Heart right ventricle (tissue), 16 donors: ENCODE measurements at regions of chr11 and their contacts with region 1.

Region 1: GRCh38 chr11:44927174-44927661 is 23.5 kb downstream of the TP53I11 start:
- DNase-seq: peak; percentile 64 to 68
- ATAC-seq: peak in 7 of 8 donors; percentile 25 to 67 (median 52)
- H3K4me3 ChIP-seq: no peak overlapping the region
- H3K27ac ChIP-seq: no peak overlapping the region
- H3K4me1 ChIP-seq: peaks cover 5 to 35% (median 14%) of the 10 kb centered on the region in 9 donors
- H3K27me3 ChIP-seq: no peaks in the 10 kb centered on the region
- CTCF ChIP-seq: peak; percentile 64 to 93 (median 88)

Region 2: GRCh38 chr11:44709966-44710365 is 217.3 kb before region 1 on chr11:
- intact Hi-C with region 1: no loop called
- DNase-seq: no peak
- ATAC-seq: no peak
- H3K4me3 ChIP-seq: no peak overlapping the region
- H3K27ac ChIP-seq: no peak overlapping the region
- H3K4me1 ChIP-seq: peaks cover 0 to 21% (median 0%) of the 10 kb centered on the region in 9 donors
- H3K27me3 ChIP-seq: no peaks in the 10 kb centered on the region
- CTCF ChIP-seq: no peak

Region 3: DNA sequence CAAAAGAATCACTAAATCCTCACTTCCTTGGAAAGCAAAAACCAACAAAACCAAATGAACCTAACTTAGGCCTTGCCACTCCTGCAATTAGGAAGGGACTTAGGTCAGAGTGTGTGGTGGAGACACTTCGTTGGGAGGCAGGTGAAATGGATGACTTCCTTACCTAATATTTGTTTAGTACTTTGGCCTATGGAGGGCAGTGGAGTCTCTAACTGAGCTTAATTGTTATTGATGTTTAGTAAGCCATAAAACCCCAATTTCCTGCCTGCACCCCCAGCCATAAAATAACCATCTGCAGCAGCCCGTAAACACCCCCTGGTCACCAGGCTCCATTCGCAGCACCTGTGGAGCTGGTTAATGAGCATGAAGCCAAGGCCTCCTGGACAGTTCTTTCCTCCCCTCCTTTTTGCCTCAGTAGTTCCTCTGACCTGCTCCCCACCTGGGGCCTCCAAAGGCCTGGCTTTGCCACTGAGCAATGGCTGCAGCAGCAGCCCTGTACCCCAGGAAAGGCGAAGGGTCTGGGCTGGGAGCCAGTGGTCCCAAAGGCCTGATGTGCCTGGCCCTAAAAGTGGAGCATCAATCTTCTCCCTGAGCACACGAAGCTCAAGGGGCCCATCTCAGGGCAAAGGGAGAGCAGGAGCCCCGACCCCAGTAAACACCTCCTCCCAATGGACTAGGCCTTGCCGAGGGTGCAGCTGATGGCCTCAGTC is 374.5 kb after region 1 on chr11:
- intact Hi-C with region 1: loop called in 7 of 10 experiments (anchors 10 kb)
- DNase-seq: no peak
- ATAC-seq: no peak
- H3K4me3 ChIP-seq: no peak overlapping the region
- H3K27ac ChIP-seq: no peak overlapping the region
- H3K4me1 ChIP-seq: no peaks in the 10 kb centered on the region
- H3K27me3 ChIP-seq: peaks cover 0 to 9% (median 0%) of the 10 kb centered on the region in 7 donors
- CTCF ChIP-seq: no peak

Region 4: GRCh38 chr11:45322891-45323600 is 395.8 kb after region 1 on chr11:
- intact Hi-C with region 1: loop called in 1 of 10 experiments (anchors 10 kb)
- DNase-seq: peak in 1 of 2 donors; percentile 22
- ATAC-seq: peak in 4 of 8 donors; percentile 32 to 65 (median 51)
- H3K4me3 ChIP-seq: no peak overlapping the region
- H3K27ac ChIP-seq: no peak overlapping the region
- H3K4me1 ChIP-seq: peaks cover 0 to 13% (median 0%) of the 10 kb centered on the region in 9 donors
- H3K27me3 ChIP-seq: peaks cover 0 to 14% (median 0%) of the 10 kb centered on the region in 7 donors
- CTCF ChIP-seq: no peak